Right ventricle myocardium inferior (tissue), 1 donor: ENCODE measurements at regions of chr13 and their contacts with region 1.

Region 1: DNA sequence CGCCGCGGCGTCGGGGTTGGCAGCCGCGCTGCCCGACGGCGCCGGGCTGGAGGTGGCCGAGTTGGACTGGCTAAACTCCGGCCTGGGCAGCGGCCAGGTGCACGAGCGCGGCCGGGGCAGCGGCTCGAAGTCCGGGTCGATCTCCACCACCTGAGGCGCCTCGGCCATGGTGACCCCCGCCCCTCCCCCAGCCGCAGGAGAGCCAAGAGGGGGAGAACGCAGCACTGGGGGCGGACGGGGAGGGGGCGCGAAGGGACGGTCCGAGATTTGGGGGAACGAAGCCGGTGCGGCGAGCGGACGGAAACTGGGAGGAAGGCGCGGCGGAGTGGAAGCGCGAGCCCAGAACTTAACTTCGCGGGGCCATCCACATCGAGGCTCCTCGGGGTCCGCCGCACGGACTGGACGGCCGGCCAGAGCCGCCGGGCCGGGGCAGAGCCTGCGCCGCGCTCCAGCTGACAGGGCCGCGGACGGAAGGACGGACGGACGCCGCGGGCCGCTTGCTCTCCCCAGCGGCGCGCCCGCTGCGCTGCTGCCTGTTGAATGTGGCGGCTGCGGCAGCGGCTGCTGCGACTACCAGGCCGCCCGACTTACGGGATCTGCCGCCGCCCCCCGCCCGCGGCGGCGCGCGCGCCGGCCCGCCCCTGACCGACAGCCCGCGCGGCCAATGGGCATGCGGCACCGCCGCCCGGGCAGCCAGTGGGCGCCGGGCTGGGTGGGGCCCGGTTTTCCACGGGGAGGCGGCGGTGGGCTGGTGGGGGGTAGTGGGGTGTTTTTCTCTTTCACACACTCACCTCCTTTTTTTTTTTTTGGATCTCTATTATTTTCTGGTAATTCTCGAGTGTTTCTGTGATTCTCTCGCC is at the start of gene FOXO1:
- DNase-seq: peak; percentile 96
- ATAC-seq: peak; percentile 88
- total RNA-seq, gene FOXO1: 14.5 TPM

Region 2: DNA sequence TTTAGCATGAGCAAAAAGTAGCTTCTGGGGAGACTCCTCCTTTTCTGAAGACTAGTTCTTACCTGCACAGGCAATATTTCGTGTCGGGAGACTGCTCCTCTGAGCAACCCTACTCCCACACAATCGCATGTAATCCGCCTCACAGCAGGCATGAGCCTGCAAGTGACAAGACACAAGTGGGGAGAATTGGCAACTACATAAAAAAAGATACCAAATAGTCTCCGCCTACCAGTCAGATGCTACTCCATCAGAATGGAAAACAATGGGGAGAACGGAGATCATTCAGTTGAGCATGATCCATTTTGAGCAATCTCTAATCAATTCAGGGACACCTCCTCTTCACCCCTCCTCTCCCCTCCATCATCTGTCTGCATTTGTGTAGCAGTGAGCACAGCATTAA is 689.8 kb before region 1 on chr13:
- intact Hi-C with region 1: no loop called
- DNase-seq: no peak
- ATAC-seq: no peak

Region 3: DNA sequence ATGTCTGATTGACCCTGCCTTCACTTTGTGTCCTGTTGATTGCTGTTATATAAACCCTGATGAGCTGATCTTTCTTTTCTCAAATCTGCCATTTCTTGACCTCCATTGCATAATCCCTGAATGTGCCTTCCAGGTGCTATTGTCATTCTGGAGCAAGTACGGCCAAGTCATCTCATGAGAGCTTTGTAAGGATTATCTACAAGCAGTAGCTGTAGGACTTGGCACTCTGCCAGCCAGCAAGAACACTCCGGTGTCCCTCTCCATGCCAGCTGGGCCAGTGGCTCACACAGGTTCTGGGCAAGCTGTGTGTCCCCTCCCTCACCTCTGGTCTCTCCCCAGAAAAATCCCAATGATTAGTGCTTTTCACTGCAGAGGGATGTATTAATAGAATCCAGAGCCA is 347.9 kb before region 1 on chr13:
- intact Hi-C with region 1: loop called (anchors 10 kb)
- DNase-seq: peak; percentile 70
- ATAC-seq: peak; percentile 50

Region 4: GRCh38 chr13:40438999-40439797 is 227.1 kb before region 1 on chr13:
- intact Hi-C with region 1: loop called (anchors 1 kb)
- DNase-seq: no peak
- ATAC-seq: peak; percentile 1

Region 5: DNA sequence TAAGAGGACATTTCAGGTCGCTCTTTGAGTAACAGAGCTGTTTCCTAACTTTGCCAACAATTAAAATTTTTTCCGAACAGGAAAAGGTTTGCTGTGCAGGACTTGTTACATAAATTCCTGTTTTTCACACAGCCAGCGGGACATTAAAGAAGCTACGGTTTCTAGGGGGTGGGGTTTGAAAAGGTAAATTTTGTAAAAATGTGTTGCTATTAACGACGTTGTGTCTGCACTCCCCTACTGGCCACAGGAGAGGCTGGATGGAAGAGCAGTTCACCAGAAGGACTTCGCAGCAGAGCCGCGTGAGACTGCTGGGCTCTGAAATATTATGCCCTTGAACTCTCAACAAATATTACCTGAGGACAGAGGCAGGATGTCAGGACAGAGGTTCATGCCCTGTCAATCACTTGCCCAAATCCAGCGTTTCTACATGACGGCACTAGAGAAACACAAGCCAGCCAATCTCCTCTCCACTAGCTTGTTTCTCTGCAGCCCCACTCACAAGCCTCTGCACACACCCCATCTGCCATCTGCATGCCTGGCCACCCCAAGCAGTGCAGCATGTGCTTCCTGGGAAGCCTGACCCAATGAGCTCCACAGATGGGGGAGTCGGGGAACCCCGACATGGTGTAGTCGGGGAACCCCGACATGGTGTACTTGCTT is 101.8 kb before region 1 on chr13:
- intact Hi-C with region 1: loop called (anchors 5 kb)
- DNase-seq: no peak
- ATAC-seq: no peak